Sigmoid colon (tissue), 7 donors: ENCODE measurements at regions of chr3 and their contacts with region 1.

Region 1: DNA sequence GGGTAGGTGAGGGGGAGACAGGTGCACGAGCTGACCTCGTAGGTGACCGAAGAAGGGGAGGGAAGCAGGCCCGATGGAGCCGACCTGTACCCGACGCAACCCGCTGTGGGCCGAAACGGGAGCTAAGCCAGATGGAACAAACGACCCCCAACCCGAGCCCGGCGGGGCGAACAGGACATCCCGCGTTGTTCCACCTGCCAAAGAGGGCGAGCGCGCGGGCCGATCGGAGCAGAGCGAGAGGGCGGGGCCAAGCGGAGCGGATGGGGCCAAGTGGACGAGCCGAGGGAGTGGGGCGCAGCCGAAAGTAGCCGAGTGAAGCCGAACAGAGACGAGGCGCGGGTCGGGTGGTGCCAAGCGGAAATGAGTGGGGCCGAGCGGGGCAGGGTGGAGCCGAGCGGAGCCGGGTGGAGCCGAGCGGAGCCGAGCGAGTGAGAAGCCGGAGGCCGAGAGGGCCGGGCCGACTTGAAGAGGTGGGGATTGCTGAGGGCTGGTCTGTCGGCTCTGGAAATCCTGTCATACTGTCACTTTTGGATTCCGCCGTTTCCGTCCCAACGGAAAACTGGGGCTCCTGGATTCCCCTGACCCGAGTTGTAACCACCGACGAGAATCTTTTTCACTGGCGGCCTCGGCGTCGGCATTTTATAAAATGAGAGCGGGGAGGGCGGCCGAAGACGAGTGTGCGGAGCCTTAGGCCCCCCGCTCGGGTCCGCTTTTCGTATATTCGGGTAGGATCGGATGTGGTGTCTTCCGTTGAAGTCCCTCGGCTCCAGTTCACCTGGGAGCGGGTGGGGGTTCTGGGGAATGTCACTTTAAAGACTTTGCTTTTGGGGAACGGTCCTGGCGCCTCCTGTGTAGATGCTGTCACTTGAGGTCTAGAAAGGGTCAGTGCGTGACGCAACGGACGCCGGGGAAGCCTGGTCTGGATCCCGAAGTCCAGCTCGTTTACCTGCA is 15.6 kb upstream of the WNT7A start:
- DNase-seq: peak; percentile 97
- H3K4me3 ChIP-seq: peak overlapping the region; percentile 48 to 72 (median 68)
- H3K27ac ChIP-seq: peak overlapping the region; percentile 74 to 79 (median 77)
- H3K4me1 ChIP-seq: peaks cover 0 to 20% (median 15%) of the 10 kb centered on the region in 4 donors
- H3K27me3 ChIP-seq: no peaks in the 10 kb centered on the region
- CTCF ChIP-seq: no peak
- EP300 ChIP-seq: no peak
- POLR2A ChIP-seq: peak in 1 of 2 donors; percentile 85

Region 2: DNA sequence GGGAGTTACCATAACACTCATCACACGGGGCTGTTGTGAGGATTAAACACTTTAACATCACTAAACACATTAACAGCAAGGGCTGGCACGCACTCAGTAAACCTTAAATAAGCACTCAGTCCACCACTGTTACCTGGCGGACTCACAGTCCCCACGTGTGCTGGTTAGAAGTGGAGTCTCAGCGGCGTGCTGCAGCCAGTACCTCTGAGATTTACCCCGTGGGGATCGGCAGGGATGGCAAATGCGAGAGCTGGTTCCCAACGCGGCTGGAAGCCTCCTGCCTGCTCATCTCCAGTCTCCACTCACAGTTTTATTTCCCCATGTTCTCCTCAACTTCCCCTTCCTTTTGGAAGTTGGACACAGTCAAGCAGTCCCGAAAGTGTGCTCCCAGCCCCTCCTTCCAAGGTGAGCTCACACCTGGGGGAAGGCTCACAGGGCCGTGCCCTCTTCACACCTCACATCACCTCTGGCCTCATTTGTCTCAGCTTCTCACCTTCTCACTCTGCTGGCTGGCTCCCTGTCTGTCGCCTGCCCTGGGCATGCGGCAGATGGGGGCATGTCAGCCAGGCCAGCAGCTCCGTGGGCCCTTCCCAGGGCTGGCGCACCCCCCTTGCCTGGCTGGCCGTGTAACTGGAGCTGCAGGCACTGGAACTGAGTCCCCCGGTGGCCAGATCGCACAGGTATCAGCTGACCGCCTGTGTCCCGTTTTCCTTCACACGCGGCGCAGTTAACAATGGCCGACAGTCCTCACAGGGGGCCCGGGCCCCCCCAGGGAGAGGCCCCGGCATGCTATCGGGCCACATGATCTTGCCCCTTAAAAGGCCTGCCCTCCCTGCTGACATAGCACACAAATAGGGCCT is 102.7 kb before region 1 on chr3:
- intact Hi-C with region 1: no loop called
- DNase-seq: no peak
- H3K4me3 ChIP-seq: no peak overlapping the region
- H3K27ac ChIP-seq: no peak overlapping the region
- H3K4me1 ChIP-seq: no peaks in the 10 kb centered on the region
- H3K27me3 ChIP-seq: peaks cover 0 to 29% (median 5%) of the 10 kb centered on the region in 3 donors
- CTCF ChIP-seq: no peak
- EP300 ChIP-seq: no peak
- POLR2A ChIP-seq: no peak

Region 3: DNA sequence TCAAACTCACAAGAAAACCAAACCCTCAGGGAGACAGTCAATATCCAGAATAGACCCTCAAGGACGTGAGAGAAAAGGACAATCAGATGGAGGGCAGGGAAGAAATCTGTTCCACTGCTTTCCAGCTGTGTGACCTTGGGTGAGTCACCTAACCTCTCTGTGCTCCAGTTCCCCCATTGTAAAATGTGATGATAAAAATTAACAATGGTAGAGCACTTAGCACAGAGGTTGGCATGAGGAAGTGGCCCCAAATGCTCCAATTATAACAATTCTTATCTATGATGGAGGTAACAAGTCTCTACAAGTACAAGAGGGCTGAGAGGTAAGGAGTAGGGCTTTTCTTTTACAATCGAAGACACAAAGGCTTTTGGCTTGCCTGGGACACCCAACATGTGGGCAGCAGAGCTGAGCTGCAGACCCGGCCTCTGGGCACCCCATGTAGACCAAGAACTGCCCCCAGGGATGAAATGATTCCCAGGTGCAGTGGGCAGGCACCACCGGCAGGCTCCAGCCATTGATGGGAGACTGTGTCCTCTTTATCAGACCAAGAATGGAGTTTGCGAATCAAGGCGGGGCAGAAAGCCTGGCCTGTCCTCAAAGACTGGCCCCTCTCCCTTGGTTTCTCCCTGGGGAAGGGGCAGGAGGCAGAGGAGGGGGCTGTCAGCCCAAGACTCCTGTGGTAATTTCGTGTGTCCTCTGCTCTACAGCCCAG is 37.6 kb before region 1 on chr3:
- intact Hi-C with region 1: no loop called
- DNase-seq: no peak
- H3K4me3 ChIP-seq: no peak overlapping the region
- H3K27ac ChIP-seq: no peak overlapping the region
- H3K4me1 ChIP-seq: no peaks in the 10 kb centered on the region
- H3K27me3 ChIP-seq: peaks cover 0 to 61% (median 13%) of the 10 kb centered on the region in 3 donors
- CTCF ChIP-seq: no peak
- EP300 ChIP-seq: no peak
- POLR2A ChIP-seq: no peak

Region 4: DNA sequence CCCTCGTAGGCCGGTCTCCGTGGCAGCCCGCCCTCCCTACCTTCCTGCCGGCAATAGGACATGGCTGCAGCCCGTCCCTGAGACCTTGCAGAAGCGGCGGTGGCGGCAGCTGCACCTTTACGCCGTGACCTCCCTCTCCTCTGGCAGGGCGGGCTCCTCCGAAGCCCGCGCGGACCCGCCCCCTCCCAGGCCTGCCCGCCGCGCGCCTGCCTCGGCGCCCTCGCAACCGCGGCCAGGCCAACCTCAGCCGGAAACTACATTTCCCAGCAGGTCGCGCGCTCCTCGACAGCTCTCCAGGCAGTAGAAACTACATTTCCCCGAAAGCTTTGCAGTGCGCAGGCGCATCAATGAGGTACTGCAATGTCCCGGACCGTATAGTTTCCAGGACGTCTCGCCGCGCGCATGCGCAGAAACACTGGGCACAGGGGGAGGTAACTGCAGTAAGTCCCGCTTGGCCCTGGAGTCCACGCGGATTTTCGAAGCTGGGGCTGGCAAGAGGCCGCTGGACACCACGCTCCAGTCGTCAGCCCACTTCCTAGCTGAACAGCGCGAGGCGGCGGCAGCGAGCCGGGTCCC is 229.3 kb after region 1 on chr3 and contains the starts of genes CHCHD4 and TMEM43:
- intact Hi-C with region 1: loop called (anchors 1 kb)
- DNase-seq: peak; percentile 100
- H3K4me3 ChIP-seq: peak within 1 kb of the TSS; percentile 68 to 96 (median 87)
- H3K27ac ChIP-seq: peak within 1 kb of the TSS; percentile 86 to 97 (median 94)
- H3K4me1 ChIP-seq: peaks cover 0 to 49% (median 38%) of the 10 kb centered on the region in 4 donors
- H3K27me3 ChIP-seq: no peaks in the 10 kb centered on the region
- CTCF ChIP-seq: no peak
- EP300 ChIP-seq: peak in 1 of 4 donors; percentile 53
- POLR2A ChIP-seq: peak; percentile 62 to 71
- total RNA-seq, gene CHCHD4: 13.0 to 33.1 (median 26.3) TPM
- total RNA-seq, gene TMEM43: 68.0 to 88.3 (median 80.2) TPM

Region 5: GRCh38 chr3:14261229-14261628 is 365.8 kb after region 1 on chr3:
- intact Hi-C with region 1: no loop called
- DNase-seq: peak; percentile 91
- H3K4me3 ChIP-seq: no peak overlapping the region
- H3K27ac ChIP-seq: no peak overlapping the region
- H3K4me1 ChIP-seq: no peaks in the 10 kb centered on the region
- H3K27me3 ChIP-seq: no peaks in the 10 kb centered on the region
- CTCF ChIP-seq: peak; percentile 86 to 97 (median 94)
- EP300 ChIP-seq: no peak
- POLR2A ChIP-seq: no peak

Region 6: DNA sequence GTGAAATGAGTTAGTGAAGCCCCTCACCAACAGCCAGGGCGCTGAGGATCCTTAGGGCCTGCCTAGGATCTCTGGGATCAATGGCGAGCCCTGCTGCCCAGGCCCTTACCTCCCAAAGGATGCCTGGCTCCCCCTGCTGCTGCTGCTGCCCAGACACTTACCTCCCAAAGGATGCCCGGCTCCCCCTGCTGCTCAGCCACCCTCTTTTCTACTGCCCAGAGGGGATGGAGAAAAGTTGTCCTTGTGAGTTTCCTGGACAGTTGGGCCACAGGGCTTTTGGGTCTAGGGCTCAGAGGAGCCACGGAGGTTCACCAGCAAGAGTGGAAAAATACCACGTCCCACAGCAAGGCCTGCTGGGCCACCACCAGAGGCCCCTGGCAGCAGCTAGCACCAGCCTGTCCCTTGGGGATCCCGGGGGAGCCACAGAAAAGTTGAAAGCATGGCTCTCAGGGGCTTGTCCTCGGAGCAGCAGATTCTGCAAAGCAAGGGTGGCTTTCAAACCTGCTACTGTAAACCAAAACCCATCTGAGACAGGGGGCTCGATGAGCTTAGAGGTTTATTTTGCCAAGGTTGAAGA is 566.4 kb after region 1 on chr3:
- intact Hi-C with region 1: loop called (anchors 10 kb)
- DNase-seq: no peak
- H3K4me3 ChIP-seq: no peak overlapping the region
- H3K27ac ChIP-seq: no peak overlapping the region
- H3K4me1 ChIP-seq: peaks cover 0 to 19% (median 13%) of the 10 kb centered on the region in 4 donors
- H3K27me3 ChIP-seq: no peaks in the 10 kb centered on the region
- CTCF ChIP-seq: peak in 3 of 4 experiments; percentile 29 to 45 (median 38)
- EP300 ChIP-seq: no peak
- POLR2A ChIP-seq: no peak